ENCODE measurements at regions of chr3 and their contacts with region 1.

Region 1: DNA sequence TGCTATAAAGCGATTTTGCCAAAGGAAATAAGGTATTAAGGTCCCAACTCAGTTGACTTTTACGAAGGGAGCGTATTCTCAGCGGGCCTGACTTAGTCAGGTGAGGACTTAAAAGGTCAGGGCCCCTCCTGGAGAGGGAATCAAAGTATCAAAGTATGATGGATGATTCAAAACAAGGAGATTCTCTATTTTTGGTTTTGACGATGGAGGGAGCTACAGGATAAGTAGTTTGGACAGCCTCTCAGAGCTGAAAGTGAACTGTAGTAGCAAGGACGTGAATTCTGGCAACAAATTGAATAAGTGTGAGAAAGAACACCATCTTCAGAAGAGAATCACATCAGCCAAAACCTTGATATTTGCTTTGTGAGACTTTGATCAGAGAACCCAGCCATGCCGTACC is 1186.5 kb downstream of the SI start:
- DNase-seq: no peak
- H3K4me3 ChIP-seq: no peak overlapping the region
- H3K27ac ChIP-seq: no peak overlapping the region
- H3K4me1 ChIP-seq: no peaks in the 10 kb centered on the region
- H3K27me3 ChIP-seq: no peaks in the 10 kb centered on the region
- CTCF ChIP-seq: no peak

Region 2: GRCh38 chr3:163622384-163622783 is 269.4 kb before region 1 on chr3:
- CTCF ChIA-PET with region 1: no interaction called
- POLR2A ChIA-PET with region 1: no interaction called
- intact Hi-C with region 1: loop called (anchors 10 kb)
- DNase-seq: peak; percentile 57
- H3K4me3 ChIP-seq: no peak overlapping the region
- H3K27ac ChIP-seq: peak overlapping the region; percentile 22
- H3K4me1 ChIP-seq: no peaks in the 10 kb centered on the region
- H3K27me3 ChIP-seq: no peaks in the 10 kb centered on the region
- CTCF ChIP-seq: peak; percentile 44; the same call in 1 of the 2 replicates

Region 3: GRCh38 chr3:163655021-163655420 is 236.8 kb before region 1 on chr3:
- CTCF ChIA-PET with region 1: no interaction called
- POLR2A ChIA-PET with region 1: no interaction called
- intact Hi-C with region 1: no loop called
- DNase-seq: no peak
- H3K4me3 ChIP-seq: no peak overlapping the region
- H3K27ac ChIP-seq: no peak overlapping the region
- H3K4me1 ChIP-seq: no peaks in the 10 kb centered on the region
- H3K27me3 ChIP-seq: no peaks in the 10 kb centered on the region
- CTCF ChIP-seq: no peak